ENCODE measurements at regions of chr3 and their contacts with region 1.

Region 1: DNA sequence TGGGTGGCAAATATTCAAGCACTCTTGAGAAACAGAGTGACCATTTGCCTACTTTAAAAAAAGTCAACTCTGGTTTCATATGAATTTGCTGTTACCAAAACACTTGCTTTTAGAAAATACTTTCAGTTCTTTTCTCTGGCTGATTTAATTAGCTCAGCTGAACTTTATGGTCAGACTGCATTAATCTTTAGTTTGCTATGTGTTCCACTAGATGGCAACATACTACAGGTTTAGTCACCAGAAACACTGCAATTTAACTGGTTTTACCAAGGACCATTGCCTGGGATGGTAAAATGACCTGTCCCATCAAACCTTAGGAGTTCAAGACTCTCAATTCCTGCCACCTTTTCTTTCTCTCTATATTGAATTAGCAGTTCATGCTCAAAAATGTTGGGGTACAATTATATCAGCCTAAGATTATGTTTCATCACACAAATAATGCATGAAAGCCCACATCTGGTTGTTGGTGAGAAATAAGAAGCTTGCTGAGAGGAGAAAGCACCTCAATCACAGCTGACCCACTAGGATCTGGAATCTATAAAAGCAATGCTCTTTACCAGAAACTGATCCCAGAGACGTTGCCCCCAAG is 14.2 kb downstream of the EIF4E3 start:
- DNase-seq: no peak

Region 2: DNA sequence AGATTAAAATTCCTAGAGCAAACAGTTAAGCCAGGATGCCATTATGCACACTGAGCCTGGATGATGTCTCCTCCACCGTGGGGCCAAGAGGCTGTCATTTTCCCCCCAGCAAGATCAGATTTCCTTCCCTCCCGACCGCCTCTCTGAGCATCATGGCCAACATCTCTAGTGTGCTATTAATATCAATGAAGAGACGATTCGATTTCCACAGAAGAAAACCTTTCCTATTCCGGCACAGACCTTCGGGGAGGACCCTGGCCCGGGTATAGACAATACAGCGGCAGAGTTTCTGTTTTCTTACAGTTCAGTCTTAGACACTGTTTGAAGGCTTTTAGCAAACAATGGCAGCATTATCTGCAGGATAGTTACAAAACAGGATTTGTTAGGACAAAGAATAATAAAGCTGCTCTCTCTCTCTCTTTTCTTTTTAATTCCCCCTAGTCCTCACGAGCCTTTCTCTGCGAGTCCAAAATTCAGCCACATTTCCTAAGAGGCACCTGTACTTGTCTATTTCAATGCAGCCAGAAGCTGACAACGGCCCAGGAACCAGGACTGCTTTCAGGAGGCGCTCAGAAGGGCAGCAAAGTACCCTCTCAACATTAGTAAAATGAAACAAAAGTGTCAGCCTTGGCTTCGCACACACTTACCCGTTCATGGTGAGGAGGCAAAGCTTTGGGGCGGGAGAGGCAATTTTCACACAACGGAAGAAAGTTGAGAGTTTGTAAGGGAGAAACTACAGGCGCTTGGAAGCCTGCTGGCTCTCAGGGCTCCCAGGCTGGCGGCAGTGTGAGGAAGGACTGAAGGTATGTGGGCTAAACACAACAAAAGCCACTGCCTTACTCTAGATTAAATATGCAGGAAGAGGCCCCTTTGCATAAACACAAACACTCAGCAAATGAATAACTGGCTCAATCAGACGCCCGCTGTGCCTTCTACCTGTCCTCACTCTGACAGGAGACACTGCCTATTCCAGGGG is 405.5 kb before region 1 on chr3:
- intact Hi-C with region 1: no loop called
- DNase-seq: no peak

Region 3: GRCh38 chr3:72829701-72830100 is 1118.7 kb after region 1 on chr3:
- intact Hi-C with region 1: loop called (anchors 5 kb)
- DNase-seq: no peak

Measured in cardiac septum (tissue), 1 donor.